Activated CD4-positive, alpha-beta memory T cell treated with anti-CD3 and anti-CD28 coated beads for 36 hours (primary cell): ENCODE measurements at regions of chr12 and their contacts with region 1.

Region 1: DNA sequence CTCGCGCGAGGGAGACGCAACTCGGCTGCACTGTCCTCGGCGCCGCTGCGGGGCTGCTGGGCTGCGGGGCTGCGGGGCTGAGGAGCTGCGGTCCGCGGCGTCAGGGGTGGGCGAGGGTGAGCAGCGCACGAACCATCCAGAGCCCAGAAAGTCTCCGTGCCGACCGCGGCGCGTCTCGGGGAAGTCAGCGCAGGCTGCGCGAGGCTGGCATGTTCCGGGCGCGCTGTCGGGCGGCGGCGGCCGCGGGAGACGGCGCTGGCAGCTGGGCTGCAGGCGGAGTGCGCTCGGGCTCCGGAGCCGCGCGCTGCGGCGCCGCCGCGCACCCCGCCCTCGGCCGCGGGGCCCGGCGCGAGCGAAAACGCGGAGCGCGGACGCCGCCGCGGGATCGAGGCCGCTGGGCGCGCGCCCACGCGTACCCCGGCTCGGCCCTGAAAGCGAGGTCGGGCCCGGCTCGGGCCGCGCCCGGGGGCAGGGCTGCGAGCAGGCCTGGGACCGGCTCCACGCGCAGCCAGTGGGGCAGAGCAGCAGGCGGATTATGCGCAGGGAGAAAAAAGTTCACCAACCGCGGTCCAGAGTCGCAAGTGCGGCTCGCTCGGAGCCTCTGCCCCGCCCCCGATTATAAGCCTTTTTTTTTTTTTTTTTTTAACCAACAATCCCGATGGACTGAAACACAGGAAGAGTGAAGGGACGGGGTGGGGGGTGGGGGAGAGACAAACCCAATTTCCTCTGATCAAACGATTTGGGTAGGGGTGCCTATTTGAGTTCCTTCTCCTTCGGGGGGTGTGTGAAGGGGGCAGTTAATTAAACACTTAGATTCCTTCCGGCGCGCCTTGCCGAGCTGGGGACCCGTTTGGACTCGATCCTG is at the start of gene PRICKLE1:
- DNase-seq: peak; percentile 34
- H3K4me3 Mint-ChIP-seq: peak within 1 kb of the TSS; percentile 62
- H3K27ac Mint-ChIP-seq: no peak within 1 kb of the TSS
- H3K4me1 Mint-ChIP-seq: peaks cover 15% of the 10 kb centered on the region
- H3K27me3 Mint-ChIP-seq: peaks cover 45% of the 10 kb centered on the region
- total RNA-seq, gene PRICKLE1: not detected

Region 2: GRCh38 chr12:42017051-42017450 is 572.6 kb before region 1 on chr12:
- CTCF ChIA-PET with region 1: no interaction called
- POLR2A ChIA-PET with region 1: no interaction called
- intact Hi-C with region 1: loop called (anchors 10 kb)
- DNase-seq: no peak
- H3K4me3 Mint-ChIP-seq: no peak overlapping the region
- H3K27ac Mint-ChIP-seq: no peak overlapping the region
- H3K4me1 Mint-ChIP-seq: no peaks in the 10 kb centered on the region
- H3K27me3 Mint-ChIP-seq: no peaks in the 10 kb centered on the region